Colonic mucosa (tissue), 4 donors: ENCODE measurements at regions of chr11 and their contacts with region 1.

Region 1: DNA sequence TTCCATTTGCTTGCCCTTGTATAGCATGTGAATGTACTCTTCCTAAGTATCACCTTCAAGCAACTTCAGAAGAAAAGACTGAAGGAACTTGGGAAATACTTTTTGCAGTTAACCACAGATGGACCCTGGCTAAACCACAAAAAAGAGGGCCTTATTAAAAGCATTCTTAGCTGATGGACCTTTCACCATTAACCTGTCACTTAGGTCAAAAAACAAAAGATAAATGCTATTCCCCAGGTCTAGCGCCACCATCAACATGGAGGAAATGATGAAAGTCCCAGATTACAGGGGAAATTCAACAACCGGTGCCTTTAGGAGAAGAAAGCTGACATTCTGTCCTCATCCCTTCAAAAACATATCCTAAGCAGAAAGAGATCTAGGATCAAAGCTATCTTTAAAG is 29.5 kb downstream of the STK33 start:
- DNase-seq: no peak
- H3K4me3 ChIP-seq: no peak overlapping the region
- H3K27ac ChIP-seq: no peak overlapping the region
- H3K4me1 ChIP-seq: no peaks in the 10 kb centered on the region
- H3K27me3 ChIP-seq: no peaks in the 10 kb centered on the region
- CTCF ChIP-seq: no peak

Region 2: GRCh38 chr11:8225589-8226036 is 338.9 kb before region 1 on chr11:
- intact Hi-C with region 1: loop called (anchors 5 kb)
- DNase-seq: peak; percentile 66
- H3K4me3 ChIP-seq: no peak overlapping the region
- H3K27ac ChIP-seq: no peak overlapping the region
- H3K4me1 ChIP-seq: peaks cover 3% of the 10 kb centered on the region
- H3K27me3 ChIP-seq: no peaks in the 10 kb centered on the region
- CTCF ChIP-seq: peak; percentile 87

Region 3: DNA sequence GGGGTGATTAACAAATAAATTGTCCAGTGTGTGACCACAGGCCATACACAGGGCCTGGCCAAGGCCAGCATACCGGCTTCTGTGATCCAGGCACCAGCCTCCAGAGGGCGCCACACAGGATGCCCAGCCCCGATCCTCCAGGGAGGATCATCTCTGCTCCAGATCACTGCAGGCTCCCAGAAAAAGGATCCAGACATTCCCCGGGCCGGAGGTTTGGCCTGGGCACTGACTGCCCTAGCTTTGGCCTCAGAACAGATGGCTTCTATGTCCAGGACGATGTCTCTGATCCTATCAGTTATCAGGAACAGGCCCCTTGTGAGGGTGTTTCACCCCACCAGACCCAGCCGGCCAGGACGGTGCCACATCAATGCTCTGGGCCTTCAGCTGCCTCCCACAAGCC is 226.4 kb before region 1 on chr11:
- intact Hi-C with region 1: loop called (anchors 5 kb)
- DNase-seq: peak; percentile 48
- H3K4me3 ChIP-seq: no peak overlapping the region
- H3K27ac ChIP-seq: no peak overlapping the region
- H3K4me1 ChIP-seq: no peaks in the 10 kb centered on the region
- H3K27me3 ChIP-seq: no peaks in the 10 kb centered on the region
- CTCF ChIP-seq: peak; percentile 69